ENCODE measurements at regions of chr2 and their contacts with region 1.

Region 1: DNA sequence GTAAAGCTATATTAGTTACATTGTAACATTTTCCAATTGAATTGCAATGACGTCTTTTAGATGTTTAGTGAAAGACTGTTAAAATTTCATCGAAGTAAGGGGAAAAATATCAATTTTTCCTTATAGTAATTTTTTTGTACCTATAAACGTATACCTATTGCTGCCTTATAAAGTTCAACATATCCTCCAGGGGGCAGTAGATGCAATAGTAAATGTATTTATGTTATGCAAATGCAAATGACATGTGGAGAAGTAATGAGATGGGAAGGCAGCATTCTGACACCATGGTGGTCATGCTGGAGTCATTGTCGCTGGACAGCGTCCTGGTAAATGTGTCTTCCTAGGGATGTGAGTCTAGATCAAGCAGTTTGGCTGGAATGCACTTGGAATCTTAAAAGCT is 38.7 kb downstream of the MSTN start:
- DNase-seq: peak; percentile 45
- H3K4me3 ChIP-seq: no peak overlapping the region
- H3K27ac ChIP-seq: no peak overlapping the region
- H3K4me1 ChIP-seq: no peaks in the 10 kb centered on the region
- H3K27me3 ChIP-seq: no peaks in the 10 kb centered on the region
- CTCF ChIP-seq: peak; percentile 61 to 63

Region 2: GRCh38 chr2:189662669-189663226 is 361.1 kb before region 1 on chr2:
- CTCF ChIA-PET with region 1: no interaction called
- dilution Hi-C with region 1: no loop called
- in situ Hi-C with region 1: no loop called
- intact Hi-C with region 1: no loop called
- DNase-seq: no peak
- H3K4me3 ChIP-seq: peak overlapping the region; percentile 70 to 98 (median 94)
- H3K27ac ChIP-seq: no peak overlapping the region
- H3K4me1 ChIP-seq: peaks cover 5% of the 10 kb centered on the region
- H3K27me3 ChIP-seq: peaks cover 2% of the 10 kb centered on the region
- CTCF ChIP-seq: no peak

Region 3: GRCh38 chr2:189698020-189698887 is 325.6 kb before region 1 on chr2:
- CTCF ChIA-PET with region 1: interaction called, 11 read pairs
- dilution Hi-C with region 1: no loop called
- in situ Hi-C with region 1: no loop called
- intact Hi-C with region 1: no loop called
- DNase-seq: peak; percentile 19
- H3K4me3 ChIP-seq: no peak overlapping the region
- H3K27ac ChIP-seq: no peak overlapping the region
- H3K4me1 ChIP-seq: no peaks in the 10 kb centered on the region
- H3K27me3 ChIP-seq: no peaks in the 10 kb centered on the region
- CTCF ChIP-seq: peak; percentile 48

Region 4: GRCh38 chr2:189937691-189938090 is 86.2 kb before region 1 on chr2:
- CTCF ChIA-PET with region 1: no interaction called
- dilution Hi-C with region 1: no loop called
- in situ Hi-C with region 1: no loop called
- intact Hi-C with region 1: no loop called
- DNase-seq: no peak
- H3K4me3 ChIP-seq: no peak overlapping the region
- H3K27ac ChIP-seq: no peak overlapping the region
- H3K4me1 ChIP-seq: no peaks in the 10 kb centered on the region
- H3K27me3 ChIP-seq: no peaks in the 10 kb centered on the region
- CTCF ChIP-seq: no peak

Region 5: GRCh38 chr2:189982777-189983394 is 41.0 kb before region 1 on chr2:
- CTCF ChIA-PET with region 1: no interaction called
- dilution Hi-C with region 1: no loop called
- in situ Hi-C with region 1: no loop called
- intact Hi-C with region 1: loop called (anchors 5 kb)
- DNase-seq: no peak
- H3K4me3 ChIP-seq: no peak overlapping the region
- H3K27ac ChIP-seq: no peak overlapping the region
- H3K4me1 ChIP-seq: no peaks in the 10 kb centered on the region
- H3K27me3 ChIP-seq: no peaks in the 10 kb centered on the region
- CTCF ChIP-seq: peak; percentile 55 to 58

Region 6: DNA sequence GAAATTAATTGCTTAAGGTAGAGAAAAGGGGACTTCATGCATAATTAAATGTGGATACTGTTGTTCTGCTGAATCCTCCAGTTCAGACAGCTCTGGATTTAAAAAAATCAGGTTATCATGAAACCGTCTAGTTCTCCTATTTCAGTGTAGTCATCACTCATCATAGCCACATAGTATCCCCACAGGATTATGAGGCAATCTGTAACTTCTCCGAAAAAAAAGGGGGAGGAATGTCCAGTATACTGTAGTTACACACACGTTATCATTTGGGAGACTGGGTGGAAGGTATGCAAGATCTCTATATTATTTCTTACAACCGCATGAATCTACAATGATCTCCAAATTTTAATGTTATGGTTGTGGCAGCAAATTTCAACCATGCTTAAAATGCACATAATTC is 181.8 kb after region 1 on chr2:
- CTCF ChIA-PET with region 1: no interaction called
- dilution Hi-C with region 1: loop called (anchors 10 kb)
- in situ Hi-C with region 1: no loop called
- intact Hi-C with region 1: no loop called
- DNase-seq: no peak
- H3K4me3 ChIP-seq: no peak overlapping the region
- H3K27ac ChIP-seq: no peak overlapping the region
- H3K4me1 ChIP-seq: no peaks in the 10 kb centered on the region
- H3K27me3 ChIP-seq: no peaks in the 10 kb centered on the region
- CTCF ChIP-seq: no peak